ENCODE measurements at regions of chr14 and their contacts with region 1.

Region 1: DNA sequence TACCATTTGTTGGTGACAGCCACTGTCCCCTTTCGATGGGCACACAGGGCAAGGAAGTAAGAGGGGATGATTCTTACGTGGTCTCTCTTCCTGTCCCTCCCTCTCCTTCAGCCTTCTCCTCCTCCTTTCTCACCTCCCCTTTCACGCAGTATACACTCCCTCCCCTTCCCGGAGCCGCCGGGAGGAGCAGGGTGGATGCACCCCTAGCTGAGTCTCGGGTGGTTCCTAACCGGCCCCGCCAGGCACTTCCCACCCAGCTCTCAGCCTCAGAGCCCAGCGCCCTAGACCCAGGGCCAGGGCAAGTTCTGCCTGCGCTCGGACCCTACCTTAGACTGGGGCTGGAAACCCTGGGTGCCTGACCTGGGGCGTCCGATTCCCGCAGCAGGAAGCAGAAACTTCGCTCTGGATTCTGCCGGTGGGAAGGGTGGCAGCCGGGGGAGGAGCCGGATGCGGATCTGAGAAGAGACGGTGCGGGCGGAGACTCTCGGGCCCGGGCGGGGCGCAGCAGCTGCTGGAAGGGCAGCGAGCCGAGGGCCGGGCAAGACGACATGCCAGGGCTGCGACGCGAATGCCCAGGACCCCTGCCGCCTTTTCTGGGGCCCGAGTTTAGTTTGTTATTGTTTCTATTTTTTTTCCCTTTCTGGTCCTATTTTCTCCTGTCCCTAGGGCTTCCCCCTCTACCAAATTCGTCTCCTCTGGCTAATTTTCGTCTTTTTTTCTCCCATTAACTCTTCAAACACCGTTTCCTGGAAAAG is at the start of gene TEP1:
- DNase-seq: no peak
- H3K4me3 ChIP-seq: peak within 1 kb of the TSS; percentile 98
- CTCF ChIP-seq: no peak

Region 2: DNA sequence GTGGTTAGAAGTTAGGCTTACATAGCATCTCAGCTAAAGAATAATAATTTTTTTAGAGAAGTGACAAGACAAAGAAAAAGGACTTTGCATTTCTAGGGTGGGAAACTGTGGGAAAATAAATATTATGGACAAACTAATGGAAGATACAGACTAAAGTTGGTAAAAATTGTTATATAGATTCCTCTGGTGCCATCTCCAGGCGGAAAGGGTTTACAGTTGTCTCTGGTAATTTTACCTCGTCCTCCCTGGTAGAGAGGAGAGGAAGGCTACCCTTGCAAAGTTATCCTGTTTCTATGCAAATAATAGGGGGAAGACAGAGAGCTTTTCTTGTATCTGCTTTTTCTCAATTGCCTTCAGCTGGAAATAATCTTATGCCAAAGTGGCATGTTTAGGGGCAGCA is 217.3 kb before region 1 on chr14:
- CTCF ChIA-PET with region 1: no interaction called
- POLR2A ChIA-PET with region 1: no interaction called
- DNase-seq: no peak
- H3K4me3 ChIP-seq: no peak overlapping the region
- CTCF ChIP-seq: no peak

Region 3: GRCh38 chr14:20327005-20327869 is 86.0 kb before region 1 on chr14:
- CTCF ChIA-PET with region 1: interaction called, 11 read pairs
- POLR2A ChIA-PET with region 1: no interaction called
- DNase-seq: no peak
- H3K4me3 ChIP-seq: no peak overlapping the region
- CTCF ChIP-seq: peak; percentile 40

Region 4: DNA sequence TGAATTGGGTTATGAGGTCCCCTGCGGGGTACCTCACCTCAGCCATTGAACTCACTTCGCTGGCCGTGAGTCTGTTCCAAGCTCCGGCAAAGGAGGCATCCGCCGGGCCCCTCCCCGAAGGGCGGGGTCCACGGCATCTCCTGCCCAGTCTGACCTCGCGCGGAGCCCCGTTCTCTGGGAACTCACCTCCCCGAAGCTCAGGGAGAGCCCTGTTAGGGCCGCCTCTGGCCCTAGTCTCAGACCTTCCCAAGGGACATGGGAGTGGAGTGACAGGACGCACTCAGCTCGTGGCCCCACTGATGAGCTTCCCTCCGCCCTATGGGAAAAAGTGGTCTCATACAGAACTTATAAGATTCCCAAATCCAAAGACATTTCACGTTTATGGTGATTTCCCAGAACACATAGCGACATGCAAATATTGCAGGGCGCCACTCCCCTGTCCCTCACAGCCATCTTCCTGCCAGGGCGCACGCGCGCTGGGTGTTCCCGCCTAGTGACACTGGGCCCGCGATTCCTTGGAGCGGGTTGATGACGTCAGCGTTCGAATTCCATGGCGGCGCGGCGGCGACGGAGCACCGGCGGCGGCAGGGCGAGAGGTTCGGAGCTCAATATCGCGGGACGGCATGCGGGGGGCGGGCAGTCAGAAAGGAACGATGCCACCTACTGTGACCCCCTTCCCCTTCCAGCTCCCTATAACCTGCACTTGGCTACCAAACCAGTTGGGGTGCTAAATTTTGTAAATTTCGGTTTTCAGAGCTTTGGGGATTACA is 69.9 kb before region 1 on chr14 and contains the start of gene PARP2:
- CTCF ChIA-PET with region 1: interaction called, 14 read pairs
- POLR2A ChIA-PET with region 1: interaction called, 16 read pairs
- DNase-seq: peak; percentile 98
- H3K4me3 ChIP-seq: peak within 1 kb of the TSS; percentile 88
- CTCF ChIP-seq: no peak

Region 5: GRCh38 chr14:20400965-20401593 is 12.1 kb before region 1 on chr14:
- CTCF ChIA-PET with region 1: interaction called, 31 read pairs
- POLR2A ChIA-PET with region 1: no interaction called
- DNase-seq: no peak
- H3K4me3 ChIP-seq: no peak overlapping the region
- CTCF ChIP-seq: no peak

Region 6: GRCh38 chr14:20434701-20435581 is 21.7 kb after region 1 on chr14:
- CTCF ChIA-PET with region 1: interaction called, 51 read pairs
- POLR2A ChIA-PET with region 1: interaction called, 5 read pairs
- DNase-seq: no peak
- H3K4me3 ChIP-seq: peak overlapping the region; percentile 20
- CTCF ChIP-seq: no peak

Region 7: DNA sequence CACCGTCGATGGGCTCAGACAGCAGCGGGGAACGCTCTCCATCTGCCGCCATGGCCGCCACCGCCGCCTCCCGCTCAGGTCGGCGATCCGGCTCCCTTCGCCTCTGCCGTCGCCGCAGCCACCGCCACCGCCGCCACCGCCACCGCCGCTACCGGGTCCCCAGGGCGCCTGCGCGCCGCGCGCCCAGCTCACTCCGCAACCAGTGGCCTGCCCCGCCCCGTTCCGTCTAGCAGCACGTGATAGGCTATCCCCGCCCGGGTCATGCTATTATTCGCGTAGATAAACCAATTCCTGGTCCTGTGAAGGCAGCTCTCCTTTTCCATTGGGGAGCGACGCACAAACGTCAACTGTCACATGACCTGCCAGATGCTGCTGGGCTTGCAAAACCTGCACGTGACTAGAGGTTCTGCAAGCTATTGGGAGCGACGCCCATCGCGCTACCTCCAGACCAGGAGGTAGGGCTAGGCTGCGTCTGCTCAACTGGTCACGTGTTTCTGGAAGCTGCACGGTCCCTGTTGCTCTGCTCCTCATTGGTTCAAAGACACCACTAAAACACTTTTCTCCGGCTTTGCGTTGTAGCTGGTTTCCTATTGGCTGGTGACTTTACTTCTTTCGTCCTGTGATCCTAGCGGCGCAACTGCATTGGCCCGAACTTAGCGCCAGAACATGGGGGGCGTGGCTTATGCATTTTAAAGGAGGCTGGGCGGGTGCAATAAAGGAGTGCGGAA is 48.2 kb after region 1 on chr14 and contains the start of gene PIP4P1:
- CTCF ChIA-PET with region 1: interaction called, 46 read pairs
- POLR2A ChIA-PET with region 1: interaction called, 13 read pairs
- DNase-seq: peak; percentile 100
- H3K4me3 ChIP-seq: peak within 1 kb of the TSS; percentile 78
- CTCF ChIP-seq: no peak

Region 8: GRCh38 chr14:21039585-21040369 is 626.6 kb after region 1 on chr14:
- CTCF ChIA-PET with region 1: no interaction called
- POLR2A ChIA-PET with region 1: no interaction called
- DNase-seq: peak; percentile 29
- H3K4me3 ChIP-seq: no peak overlapping the region
- CTCF ChIP-seq: peak; percentile 56